ENCODE measurements at regions of chr17 and their contacts with region 1.

Region 1: GRCh38 chr17:43740541-43740940 is 18.1 kb downstream of the SOST start:
- DNase-seq: no peak
- H3K4me3 ChIP-seq: no peak overlapping the region
- H3K4me1 ChIP-seq: peaks cover under 1% of the 10 kb centered on the region
- H3K27me3 ChIP-seq: no peaks in the 10 kb centered on the region

Region 2: DNA sequence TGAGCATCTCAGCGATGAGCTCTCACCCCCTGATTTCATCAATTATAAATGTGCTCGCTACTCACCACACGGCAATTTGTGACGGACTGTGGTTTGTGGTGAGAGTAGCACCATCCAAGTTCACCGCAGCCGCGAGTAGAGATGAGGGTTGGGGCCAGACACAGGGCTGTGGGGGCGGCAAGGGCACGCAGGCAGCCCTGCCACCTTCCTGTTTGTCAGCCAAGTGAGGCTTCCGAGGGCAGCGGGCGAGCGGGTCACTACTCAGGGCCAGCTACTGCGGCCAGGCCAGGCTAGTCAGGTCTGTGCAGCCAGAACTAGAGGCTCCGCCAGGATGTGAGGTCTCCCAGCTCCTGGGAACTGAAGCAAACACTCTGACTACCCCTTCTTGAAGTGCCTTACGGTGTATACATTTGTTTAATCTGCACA is 39.2 kb before region 1 on chr17:
- in situ Hi-C with region 1: loop called (anchors 5 kb)
- DNase-seq: no peak
- H3K4me3 ChIP-seq: no peak overlapping the region
- H3K4me1 ChIP-seq: no peaks in the 10 kb centered on the region
- H3K27me3 ChIP-seq: no peaks in the 10 kb centered on the region

Region 3: GRCh38 chr17:44024271-44024663 is 283.7 kb after region 1 on chr17:
- in situ Hi-C with region 1: no loop called
- DNase-seq: no peak
- H3K4me3 ChIP-seq: no peak overlapping the region
- H3K4me1 ChIP-seq: no peaks in the 10 kb centered on the region
- H3K27me3 ChIP-seq: no peaks in the 10 kb centered on the region